T-cell (primary cell): ENCODE measurements at regions of chr14 and their contacts with region 1.

Region 1: DNA sequence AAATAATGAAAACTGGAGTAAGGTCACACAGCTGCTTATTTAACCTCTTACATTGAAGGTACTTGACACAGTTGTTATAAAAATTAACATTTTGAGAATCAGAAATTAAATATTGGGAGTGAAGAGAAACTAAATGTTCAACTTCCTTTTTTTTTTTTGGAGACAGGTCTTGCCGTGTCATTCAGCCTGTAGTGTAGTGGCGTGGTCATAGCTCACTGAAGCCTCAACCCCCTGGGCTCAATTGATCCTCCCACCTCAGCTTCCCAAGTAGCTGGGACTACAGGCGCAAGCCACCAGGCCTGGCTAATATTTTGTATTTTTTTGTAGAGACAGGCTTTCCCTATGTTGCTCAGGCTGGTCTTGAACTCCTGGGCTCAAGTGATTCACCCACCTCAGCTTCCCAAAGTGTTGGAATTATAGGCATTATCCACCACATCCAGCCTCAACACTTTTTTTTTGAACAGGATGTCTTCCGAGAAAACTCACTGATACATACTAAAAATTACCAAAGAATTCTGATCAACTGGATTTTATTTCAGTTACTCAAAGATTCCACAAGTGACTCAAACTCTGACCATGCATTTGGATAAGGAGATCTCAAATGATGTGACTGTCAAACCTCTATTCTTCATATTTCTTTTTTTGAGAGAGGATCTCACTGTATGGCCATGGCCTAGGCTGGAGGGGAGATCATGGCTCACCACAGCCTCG is 35.4 kb downstream of the SGPP1 start:
- DNase-seq: no peak
- ATAC-seq: no peak
- H3K4me3 ChIP-seq: no peak overlapping the region
- H3K4me3 Mint-ChIP-seq: no peak overlapping the region
- H3K27ac ChIP-seq: no peak overlapping the region
- H3K27ac Mint-ChIP-seq: peak overlapping the region in 1 of 2 donors; percentile 31
- H3K4me1 ChIP-seq: no peaks in the 10 kb centered on the region
- H3K4me1 Mint-ChIP-seq: peaks cover 9 to 16% (median 12%) of the 10 kb centered on the region in 3 donors
- H3K27me3 ChIP-seq: no peaks in the 10 kb centered on the region
- H3K27me3 Mint-ChIP-seq: no peaks in the 10 kb centered on the region

Region 2: GRCh38 chr14:63737582-63738006 is 45.1 kb after region 1 on chr14:
- CTCF ChIA-PET with region 1: no interaction called
- POLR2A ChIA-PET with region 1: no interaction called
- DNase-seq: peak in 1 of 35 experiments; percentile 18
- ATAC-seq: peak in 2 of 4 experiments; percentile 50 to 53
- H3K4me3 ChIP-seq: no peak overlapping the region
- H3K4me3 Mint-ChIP-seq: peak overlapping the region; percentile 60 to 68 (median 61)
- H3K27ac ChIP-seq: peak overlapping the region; percentile 4
- H3K27ac Mint-ChIP-seq: peak overlapping the region; percentile 86
- H3K4me1 ChIP-seq: peaks cover 0 to 8% of the 10 kb centered on the region in 2 experiments
- H3K4me1 Mint-ChIP-seq: peaks cover 11 to 14% (median 12%) of the 10 kb centered on the region in 3 donors
- H3K27me3 ChIP-seq: no peaks in the 10 kb centered on the region
- H3K27me3 Mint-ChIP-seq: no peaks in the 10 kb centered on the region

Region 3: DNA sequence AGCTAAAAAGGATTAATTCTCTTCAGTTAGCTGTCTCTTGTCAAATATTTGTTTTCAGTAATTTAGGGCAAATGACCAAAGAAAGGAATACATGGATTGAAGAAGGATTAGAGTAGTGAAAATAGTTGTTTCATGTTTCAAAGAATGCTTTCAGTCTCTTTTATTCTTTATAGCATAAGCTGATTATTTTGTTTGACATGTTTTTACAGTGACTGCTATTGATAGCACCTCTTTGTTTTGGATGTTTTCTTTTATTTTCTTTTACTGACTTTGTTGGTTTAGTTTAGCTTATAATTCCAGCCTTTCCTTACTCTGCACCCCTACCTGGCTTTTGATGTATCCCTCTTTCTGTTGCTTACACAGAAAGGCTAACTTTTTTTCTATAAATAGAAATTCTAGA is 64.7 kb after region 1 on chr14:
- CTCF ChIA-PET with region 1: interaction called in 1 of 2 experiments, 11 read pairs
- POLR2A ChIA-PET with region 1: no interaction called
- DNase-seq: no peak
- ATAC-seq: no peak
- H3K4me3 ChIP-seq: no peak overlapping the region
- H3K4me3 Mint-ChIP-seq: no peak overlapping the region
- H3K27ac ChIP-seq: no peak overlapping the region
- H3K27ac Mint-ChIP-seq: peak overlapping the region in 1 of 2 donors; percentile 58
- H3K4me1 ChIP-seq: peaks cover 7 to 14% of the 10 kb centered on the region in 2 experiments
- H3K4me1 Mint-ChIP-seq: peaks cover 13% of the 10 kb centered on the region in 3 donors
- H3K27me3 ChIP-seq: peaks cover 0 to 2% of the 10 kb centered on the region in 2 experiments
- H3K27me3 Mint-ChIP-seq: no peaks in the 10 kb centered on the region